B cell (primary cell): ENCODE measurements at regions of chr11 and their contacts with region 1.

Region 1: DNA sequence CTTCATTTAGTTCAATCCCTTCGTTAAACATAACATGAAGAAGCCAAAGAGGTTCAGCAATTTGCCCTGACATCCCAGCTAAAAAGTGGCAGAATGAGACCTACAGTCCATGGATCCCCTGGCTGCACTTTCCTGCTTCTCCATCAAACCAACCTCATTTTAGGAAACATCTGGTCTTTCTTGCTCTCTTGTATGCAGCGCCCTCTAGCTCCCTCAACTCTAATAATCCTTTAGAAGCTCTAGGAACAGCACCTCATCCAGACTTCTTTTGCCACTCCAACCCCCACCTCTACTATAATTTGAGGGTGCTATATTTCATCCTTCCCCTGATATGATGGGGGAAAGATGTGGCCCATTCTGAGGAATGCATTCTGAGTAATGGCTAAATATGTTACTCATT is 7.4 kb downstream of the CNTF start:
- DNase-seq: peak; percentile 50
- ATAC-seq: no peak
- H3K4me3 ChIP-seq: no peak overlapping the region
- H3K4me3 Mint-ChIP-seq: no peak overlapping the region
- H3K27ac ChIP-seq: no peak overlapping the region
- H3K27ac Mint-ChIP-seq: peak overlapping the region; percentile 8
- H3K4me1 ChIP-seq: peaks cover 3 to 5% of the 10 kb centered on the region in 2 donors
- H3K4me1 Mint-ChIP-seq: peaks cover 21% of the 10 kb centered on the region
- H3K27me3 ChIP-seq: no peaks in the 10 kb centered on the region
- H3K27me3 Mint-ChIP-seq: no peaks in the 10 kb centered on the region
- CTCF ChIP-seq: peak; percentile 47

Region 2: DNA sequence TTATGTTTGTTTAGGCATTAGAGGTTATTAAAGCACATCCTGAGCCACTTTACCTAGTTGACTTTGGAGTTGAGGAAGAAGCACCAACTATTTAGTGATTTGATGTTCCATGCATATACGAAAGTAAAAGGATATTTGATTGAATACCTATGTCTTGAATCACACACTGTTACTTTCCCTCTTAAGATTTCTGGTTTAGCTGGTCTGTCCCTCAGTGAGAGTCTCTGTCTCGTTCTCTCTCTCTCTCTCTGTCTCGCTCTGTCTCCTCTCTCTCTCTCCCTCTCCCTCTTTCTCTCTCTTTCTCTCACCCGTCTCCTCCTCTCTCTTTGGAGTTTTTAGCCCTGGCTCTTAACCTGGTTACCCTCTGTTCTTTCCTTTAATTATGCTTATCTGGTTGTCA is 857.3 kb before region 1 on chr11:
- CTCF ChIA-PET with region 1: no interaction called
- POLR2A ChIA-PET with region 1: no interaction called
- intact Hi-C with region 1: no loop called
- DNase-seq: no peak
- ATAC-seq: no peak
- H3K4me3 ChIP-seq: no peak overlapping the region
- H3K4me3 Mint-ChIP-seq: no peak overlapping the region
- H3K27ac ChIP-seq: no peak overlapping the region
- H3K27ac Mint-ChIP-seq: no peak overlapping the region
- H3K4me1 ChIP-seq: peaks cover 4 to 13% of the 10 kb centered on the region in 2 donors
- H3K4me1 Mint-ChIP-seq: peaks cover 24% of the 10 kb centered on the region
- H3K27me3 ChIP-seq: no peaks in the 10 kb centered on the region
- H3K27me3 Mint-ChIP-seq: no peaks in the 10 kb centered on the region
- CTCF ChIP-seq: no peak

Region 3: GRCh38 chr11:58562375-58562800 is 67.5 kb before region 1 on chr11:
- CTCF ChIA-PET with region 1: interaction called, 81 read pairs
- POLR2A ChIA-PET with region 1: no interaction called
- intact Hi-C with region 1: no loop called
- DNase-seq: no peak
- ATAC-seq: no peak
- H3K4me3 ChIP-seq: no peak overlapping the region
- H3K4me3 Mint-ChIP-seq: no peak overlapping the region
- H3K27ac ChIP-seq: peak overlapping the region in 1 of 2 donors; percentile 49
- H3K27ac Mint-ChIP-seq: peak overlapping the region; percentile 57
- H3K4me1 ChIP-seq: peaks cover 18 to 22% of the 10 kb centered on the region in 2 donors
- H3K4me1 Mint-ChIP-seq: peaks cover 38% of the 10 kb centered on the region
- H3K27me3 ChIP-seq: no peaks in the 10 kb centered on the region
- H3K27me3 Mint-ChIP-seq: no peaks in the 10 kb centered on the region
- CTCF ChIP-seq: no peak

Region 4: DNA sequence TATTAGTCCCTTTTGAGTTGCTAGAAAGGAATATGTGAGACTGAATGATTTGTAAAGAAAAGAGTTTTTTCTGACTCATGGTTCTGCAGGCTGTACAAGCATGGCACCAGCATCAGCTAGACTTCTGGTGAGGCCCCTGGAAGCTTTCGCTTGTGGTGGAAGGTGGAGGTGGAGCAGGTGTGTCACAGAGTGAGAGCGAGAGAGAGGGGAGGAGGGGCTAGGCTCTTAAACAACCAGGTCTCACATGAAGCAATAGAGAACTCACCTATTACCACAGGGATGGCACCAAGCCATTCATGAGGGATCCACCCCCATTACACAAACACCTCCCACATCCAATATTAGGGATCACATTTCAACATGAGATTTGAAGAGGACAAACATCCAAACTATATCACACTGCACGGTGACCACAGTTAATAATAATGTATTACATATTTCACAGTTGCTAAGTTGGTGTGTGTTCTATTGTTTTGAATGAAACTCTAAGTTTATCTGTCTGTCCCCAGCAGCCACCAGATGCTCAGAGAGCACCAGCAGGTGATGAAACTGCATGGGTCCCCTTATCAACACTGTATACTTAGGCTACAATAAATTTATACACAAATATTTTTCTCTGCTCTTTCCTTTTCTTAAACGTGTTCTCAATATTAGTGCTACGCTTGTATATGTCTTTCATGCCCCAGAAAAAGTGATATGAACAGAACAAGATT is 36.9 kb before region 1 on chr11:
- CTCF ChIA-PET with region 1: no interaction called
- POLR2A ChIA-PET with region 1: no interaction called
- intact Hi-C with region 1: no loop called
- DNase-seq: no peak
- ATAC-seq: no peak
- H3K4me3 ChIP-seq: no peak overlapping the region
- H3K4me3 Mint-ChIP-seq: no peak overlapping the region
- H3K27ac ChIP-seq: no peak overlapping the region
- H3K27ac Mint-ChIP-seq: no peak overlapping the region
- H3K4me1 ChIP-seq: peaks cover 3 to 6% of the 10 kb centered on the region in 2 donors
- H3K4me1 Mint-ChIP-seq: peaks cover 35% of the 10 kb centered on the region
- H3K27me3 ChIP-seq: no peaks in the 10 kb centered on the region
- H3K27me3 Mint-ChIP-seq: no peaks in the 10 kb centered on the region
- CTCF ChIP-seq: no peak

Region 5: GRCh38 chr11:58609723-58610122 is 20.1 kb before region 1 on chr11:
- CTCF ChIA-PET with region 1: interaction called, 12 read pairs
- POLR2A ChIA-PET with region 1: no interaction called
- intact Hi-C with region 1: no loop called
- DNase-seq: peak; percentile 25
- ATAC-seq: peak; percentile 47
- H3K4me3 ChIP-seq: no peak overlapping the region
- H3K4me3 Mint-ChIP-seq: peak overlapping the region; percentile 26
- H3K27ac ChIP-seq: peak overlapping the region in 1 of 2 donors; percentile 18
- H3K27ac Mint-ChIP-seq: peak overlapping the region; percentile 33
- H3K4me1 ChIP-seq: peaks cover 11 to 20% of the 10 kb centered on the region in 2 donors
- H3K4me1 Mint-ChIP-seq: peaks cover 38% of the 10 kb centered on the region
- H3K27me3 ChIP-seq: no peaks in the 10 kb centered on the region
- H3K27me3 Mint-ChIP-seq: no peaks in the 10 kb centered on the region
- CTCF ChIP-seq: no peak

Region 6: GRCh38 chr11:58616594-58616993 is 13.3 kb before region 1 on chr11:
- CTCF ChIA-PET with region 1: interaction called, 14 read pairs
- POLR2A ChIA-PET with region 1: no interaction called
- intact Hi-C with region 1: no loop called
- DNase-seq: no peak
- ATAC-seq: no peak
- H3K4me3 ChIP-seq: no peak overlapping the region
- H3K4me3 Mint-ChIP-seq: no peak overlapping the region
- H3K27ac ChIP-seq: no peak overlapping the region
- H3K27ac Mint-ChIP-seq: no peak overlapping the region
- H3K4me1 ChIP-seq: no peaks in the 10 kb centered on the region
- H3K4me1 Mint-ChIP-seq: no peaks in the 10 kb centered on the region
- H3K27me3 ChIP-seq: no peaks in the 10 kb centered on the region
- H3K27me3 Mint-ChIP-seq: no peaks in the 10 kb centered on the region
- CTCF ChIP-seq: no peak

Region 7: DNA sequence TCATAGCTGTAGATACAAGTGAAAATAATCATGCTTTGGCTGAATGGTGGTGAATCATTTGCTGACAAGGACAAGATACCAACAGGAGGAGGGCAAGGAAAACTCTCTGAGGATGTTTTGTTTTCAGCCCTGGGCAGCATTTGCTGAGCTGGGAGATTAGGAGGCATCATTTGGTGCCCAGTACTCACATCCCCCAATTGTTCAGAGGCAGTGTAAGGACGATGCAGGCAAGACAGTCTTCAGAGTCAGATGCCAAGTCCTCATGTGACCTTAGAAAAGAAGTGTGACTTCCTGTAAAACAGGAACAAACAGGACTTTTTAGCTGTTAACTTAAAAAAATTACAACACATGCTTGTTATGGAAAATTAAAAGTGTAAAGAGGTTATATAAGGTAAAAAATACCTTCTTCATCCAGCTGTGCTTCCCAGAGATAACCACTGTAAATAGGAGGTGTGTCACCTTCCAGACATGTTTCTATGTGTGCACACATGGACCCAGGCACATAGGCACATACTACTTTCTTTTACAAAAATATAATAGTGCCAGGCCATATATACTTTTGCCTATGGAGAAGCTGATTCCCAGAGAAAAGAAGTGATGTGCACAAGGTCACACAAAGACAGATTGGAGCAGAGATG is 10.6 kb after region 1 on chr11:
- CTCF ChIA-PET with region 1: interaction called, 25 read pairs
- POLR2A ChIA-PET with region 1: no interaction called
- intact Hi-C with region 1: no loop called
- DNase-seq: no peak
- ATAC-seq: no peak
- H3K4me3 ChIP-seq: no peak overlapping the region
- H3K4me3 Mint-ChIP-seq: no peak overlapping the region
- H3K27ac ChIP-seq: no peak overlapping the region
- H3K27ac Mint-ChIP-seq: no peak overlapping the region
- H3K4me1 ChIP-seq: peaks cover 10 to 12% of the 10 kb centered on the region in 2 donors
- H3K4me1 Mint-ChIP-seq: peaks cover 14% of the 10 kb centered on the region
- H3K27me3 ChIP-seq: no peaks in the 10 kb centered on the region
- H3K27me3 Mint-ChIP-seq: peaks cover 6% of the 10 kb centered on the region
- CTCF ChIP-seq: no peak

Region 8: GRCh38 chr11:58647141-58647699 is 17.4 kb after region 1 on chr11:
- CTCF ChIA-PET with region 1: interaction called, 16 read pairs
- POLR2A ChIA-PET with region 1: no interaction called
- intact Hi-C with region 1: no loop called
- DNase-seq: peak; percentile 49
- ATAC-seq: peak; percentile 93
- H3K4me3 ChIP-seq: no peak overlapping the region
- H3K4me3 Mint-ChIP-seq: peak overlapping the region; percentile 14
- H3K27ac ChIP-seq: no peak overlapping the region
- H3K27ac Mint-ChIP-seq: peak overlapping the region; percentile 76
- H3K4me1 ChIP-seq: peaks cover 5 to 12% of the 10 kb centered on the region in 2 donors
- H3K4me1 Mint-ChIP-seq: peaks cover 20% of the 10 kb centered on the region
- H3K27me3 ChIP-seq: no peaks in the 10 kb centered on the region
- H3K27me3 Mint-ChIP-seq: peaks cover 6% of the 10 kb centered on the region
- CTCF ChIP-seq: no peak

Region 9: DNA sequence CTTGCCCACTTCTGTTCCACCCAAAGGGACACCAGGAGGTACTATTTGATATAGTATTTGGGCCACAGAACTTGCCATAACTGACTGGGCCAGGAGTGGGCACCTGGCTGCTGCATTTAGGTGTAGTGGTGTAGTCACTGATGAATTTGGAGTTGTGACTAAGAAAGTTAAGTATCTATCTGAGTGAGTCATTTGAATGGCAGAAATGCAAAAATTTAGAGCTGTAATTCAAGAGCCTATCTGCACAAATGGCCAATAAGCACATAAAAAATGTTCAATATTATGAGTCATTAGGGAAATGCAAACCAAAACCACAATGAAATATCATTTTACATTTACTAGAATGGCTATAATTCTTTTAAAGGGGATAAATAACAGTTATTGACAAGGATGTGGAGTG is 199.9 kb after region 1 on chr11:
- CTCF ChIA-PET with region 1: no interaction called
- POLR2A ChIA-PET with region 1: no interaction called
- intact Hi-C with region 1: no loop called
- DNase-seq: no peak
- ATAC-seq: no peak
- H3K4me3 ChIP-seq: no peak overlapping the region
- H3K4me3 Mint-ChIP-seq: no peak overlapping the region
- H3K27ac ChIP-seq: no peak overlapping the region
- H3K27ac Mint-ChIP-seq: no peak overlapping the region
- H3K4me1 ChIP-seq: no peaks in the 10 kb centered on the region
- H3K4me1 Mint-ChIP-seq: no peaks in the 10 kb centered on the region
- H3K27me3 ChIP-seq: peaks cover 0 to 3% (median 1%) of the 10 kb centered on the region in 4 experiments
- H3K27me3 Mint-ChIP-seq: peaks cover 24% of the 10 kb centered on the region
- CTCF ChIP-seq: no peak